ENCODE measurements at regions of chrX and their contacts with region 1.

Region 1: DNA sequence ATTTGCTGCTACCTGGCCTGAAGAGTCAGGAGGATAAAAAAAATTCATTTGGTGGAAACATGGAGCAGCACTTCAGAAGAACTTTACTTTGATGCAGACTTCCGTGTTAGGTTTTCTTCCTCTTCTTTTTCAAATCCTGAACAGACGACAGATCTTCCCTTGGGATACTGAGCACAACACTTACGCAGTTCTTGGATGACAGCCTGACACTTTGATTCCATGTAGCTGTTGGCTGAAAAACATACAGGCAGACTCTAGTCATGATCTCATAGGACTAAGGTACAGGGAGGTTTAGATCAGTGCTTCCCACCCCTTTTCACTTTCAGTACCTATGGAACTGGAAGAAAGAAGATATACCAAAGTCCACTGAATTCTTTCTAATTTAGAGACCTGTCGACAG is 9.2 kb downstream of the CMC4 start:
- DNase-seq: no peak
- H3K4me3 ChIP-seq: no peak overlapping the region
- H3K27ac ChIP-seq: no peak overlapping the region
- H3K4me1 ChIP-seq: peaks cover 0 to 10% (median 8%) of the 10 kb centered on the region in 6 donors
- H3K27me3 ChIP-seq: no peaks in the 10 kb centered on the region
- CTCF ChIP-seq: no peak
- POLR2A ChIP-seq: no peak

Region 2: DNA sequence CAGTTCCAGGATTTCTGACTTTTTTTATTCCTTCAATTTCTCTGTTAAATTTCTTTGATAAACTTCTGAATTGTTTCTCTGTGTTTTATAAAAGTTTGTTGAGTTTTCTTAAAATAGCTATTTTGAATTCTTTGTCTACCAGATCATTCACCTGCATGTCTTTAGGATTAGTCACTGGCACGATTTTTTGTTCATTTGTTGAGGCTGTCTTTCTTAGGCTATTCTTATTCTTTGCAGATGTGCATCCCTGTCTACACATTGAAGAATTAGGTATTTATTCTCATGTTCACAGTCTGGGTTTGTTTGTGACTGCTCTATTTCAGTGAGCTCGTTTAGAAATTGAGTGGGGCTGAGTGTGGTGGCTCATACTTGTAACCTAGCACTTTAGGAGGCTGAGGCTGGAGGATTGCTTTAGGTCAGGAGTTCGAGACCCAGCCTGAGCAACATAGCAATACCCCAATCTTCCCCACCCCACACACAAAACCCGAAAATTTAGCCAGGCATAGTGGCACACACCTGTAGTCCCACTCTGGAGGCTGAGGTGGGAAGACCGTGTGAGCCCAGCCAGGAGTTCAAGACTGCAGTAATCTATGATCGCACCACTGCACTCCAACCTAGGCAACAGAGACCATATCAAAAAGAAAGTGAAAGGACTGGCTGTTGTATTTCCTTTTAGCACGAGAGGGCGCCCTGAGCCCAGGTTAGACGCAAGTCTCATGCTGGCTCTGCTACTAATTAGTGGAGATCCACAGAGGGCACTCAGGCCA is 81.2 kb before region 1 on chrX:
- intact Hi-C with region 1: loop called (anchors 5 kb)
- DNase-seq: peak; percentile 85
- H3K4me3 ChIP-seq: peak overlapping the region in 4 of 8 donors; percentile 10 to 64 (median 26)
- H3K27ac ChIP-seq: peak overlapping the region in 5 of 8 donors; percentile 16 to 63 (median 35)
- H3K4me1 ChIP-seq: peaks cover 0 to 13% (median 0%) of the 10 kb centered on the region in 6 donors
- H3K27me3 ChIP-seq: no peaks in the 10 kb centered on the region
- CTCF ChIP-seq: peak; percentile 39 to 82 (median 74)
- POLR2A ChIP-seq: no peak

Region 3: GRCh38 chrX:155112171-155112570 is 50.4 kb after region 1 on chrX:
- intact Hi-C with region 1: no loop called
- DNase-seq: no peak
- H3K4me3 ChIP-seq: no peak overlapping the region
- H3K27ac ChIP-seq: no peak overlapping the region
- H3K4me1 ChIP-seq: no peaks in the 10 kb centered on the region
- H3K27me3 ChIP-seq: no peaks in the 10 kb centered on the region
- CTCF ChIP-seq: no peak
- POLR2A ChIP-seq: no peak

Measured in spleen (tissue), 13 donors.